ENCODE measurements at regions of chr1 and their contacts with region 1.

Region 1: GRCh38 chr1:31789259-31790065 is 25.3 kb upstream of the ADGRB2 start:
- DNase-seq: peak; percentile 95 to 99 (median 98)
- ATAC-seq: peak; percentile 91
- H3K4me3 ChIP-seq: peak overlapping the region; percentile 57
- H3K27ac ChIP-seq: no peak overlapping the region
- H3K4me1 ChIP-seq: peaks cover 9 to 29% of the 10 kb centered on the region in 2 experiments; a peak in 4 of 5 replicates
- H3K27me3 ChIP-seq: peaks cover 16 to 44% of the 10 kb centered on the region in 2 experiments
- CTCF ChIP-seq: peak; percentile 92 to 99 (median 99)
- EP300 ChIP-seq: peak; percentile 19; the same call in 1 of the 2 replicates
- POLR2A ChIP-seq: no peak
- RAD21 ChIP-seq: peak; percentile 98

Region 2: GRCh38 chr1:31765041-31765467 is 24.4 kb before region 1 on chr1:
- CTCF ChIA-PET with region 1: interaction called, 48 read pairs
- POLR2A ChIA-PET with region 1: interaction called, 3 read pairs
- in situ Hi-C with region 1: no loop called
- intact Hi-C with region 1: loop called (anchors 1 kb)
- DNase-seq: peak in 3 of 4 experiments; percentile 45 to 72 (median 65)
- ATAC-seq: peak; percentile 69
- H3K4me3 ChIP-seq: no peak overlapping the region
- H3K27ac ChIP-seq: no peak overlapping the region
- H3K4me1 ChIP-seq: peaks cover 26 to 41% of the 10 kb centered on the region in 2 experiments
- H3K27me3 ChIP-seq: peaks cover 36 to 63% of the 10 kb centered on the region in 2 experiments; a peak in 4 of 5 replicates
- CTCF ChIP-seq: peak; percentile 66 to 78 (median 70)
- EP300 ChIP-seq: no peak
- POLR2A ChIP-seq: no peak
- RAD21 ChIP-seq: peak; percentile 75 to 83